Sigmoid colon (tissue), 7 donors: ENCODE measurements at regions of chr9 and their contacts with region 1.

Region 1: GRCh38 chr9:94213511-94214124 is 45.5 kb upstream of the ZNF169 start:
- DNase-seq: peak; percentile 86
- H3K4me3 ChIP-seq: no peak overlapping the region
- H3K27ac ChIP-seq: no peak overlapping the region
- H3K4me1 ChIP-seq: peaks cover 0 to 5% (median 0%) of the 10 kb centered on the region in 4 donors
- H3K27me3 ChIP-seq: no peaks in the 10 kb centered on the region
- CTCF ChIP-seq: peak; percentile 70 to 88 (median 80)
- EP300 ChIP-seq: no peak
- POLR2A ChIP-seq: no peak

Region 2: DNA sequence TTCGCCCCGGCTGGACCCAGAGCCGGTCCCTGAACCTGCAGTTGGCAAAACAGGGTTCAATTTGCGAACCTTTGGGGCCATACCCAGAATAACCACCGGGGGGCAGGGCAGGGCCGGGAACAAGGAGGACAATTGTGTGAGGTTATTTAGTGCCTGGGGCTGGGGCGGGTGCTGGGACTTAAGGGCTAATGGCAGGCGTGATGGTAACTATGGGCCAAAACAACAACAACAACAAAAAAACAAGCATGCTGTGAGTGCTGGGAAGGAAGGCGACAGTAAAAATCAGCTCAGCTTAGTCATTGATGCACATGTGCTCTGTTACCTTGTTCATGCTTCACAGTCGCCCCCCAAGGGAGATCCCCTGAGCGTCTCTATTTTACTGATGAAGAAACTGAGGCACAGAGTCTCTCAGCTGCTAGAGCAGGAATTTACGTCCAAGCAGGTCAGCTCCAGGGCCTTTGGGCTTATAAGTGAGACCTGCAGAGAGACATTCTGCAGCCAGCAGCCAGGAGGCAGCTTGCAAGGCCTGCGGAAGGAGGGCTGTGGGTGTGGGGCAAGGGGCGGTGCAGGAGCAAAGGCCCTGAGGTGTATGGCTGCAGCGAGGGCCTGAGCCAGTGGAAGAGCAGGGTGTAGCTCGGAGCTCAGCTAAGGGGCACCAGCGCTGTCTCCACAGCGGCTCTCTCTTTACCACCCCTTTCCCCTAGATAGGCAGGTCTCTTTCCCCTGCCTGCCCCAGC is 531.2 kb before region 1 on chr9:
- intact Hi-C with region 1: loop called (anchors 5 kb)
- DNase-seq: peak; percentile 75
- H3K4me3 ChIP-seq: no peak overlapping the region
- H3K27ac ChIP-seq: no peak overlapping the region
- H3K4me1 ChIP-seq: peaks cover 0 to 4% (median 0%) of the 10 kb centered on the region in 4 donors
- H3K27me3 ChIP-seq: no peaks in the 10 kb centered on the region
- CTCF ChIP-seq: peak; percentile 70 to 84 (median 82)
- EP300 ChIP-seq: no peak
- POLR2A ChIP-seq: no peak

Region 3: GRCh38 chr9:94018628-94019027 is 195.0 kb before region 1 on chr9:
- intact Hi-C with region 1: loop called (anchors 5 kb)
- DNase-seq: no peak
- H3K4me3 ChIP-seq: no peak overlapping the region
- H3K27ac ChIP-seq: peak overlapping the region in 3 of 4 donors; percentile 39 to 76 (median 41)
- H3K4me1 ChIP-seq: peaks cover 0 to 15% (median 6%) of the 10 kb centered on the region in 4 donors
- H3K27me3 ChIP-seq: no peaks in the 10 kb centered on the region
- CTCF ChIP-seq: no peak
- EP300 ChIP-seq: no peak
- POLR2A ChIP-seq: no peak

Region 4: DNA sequence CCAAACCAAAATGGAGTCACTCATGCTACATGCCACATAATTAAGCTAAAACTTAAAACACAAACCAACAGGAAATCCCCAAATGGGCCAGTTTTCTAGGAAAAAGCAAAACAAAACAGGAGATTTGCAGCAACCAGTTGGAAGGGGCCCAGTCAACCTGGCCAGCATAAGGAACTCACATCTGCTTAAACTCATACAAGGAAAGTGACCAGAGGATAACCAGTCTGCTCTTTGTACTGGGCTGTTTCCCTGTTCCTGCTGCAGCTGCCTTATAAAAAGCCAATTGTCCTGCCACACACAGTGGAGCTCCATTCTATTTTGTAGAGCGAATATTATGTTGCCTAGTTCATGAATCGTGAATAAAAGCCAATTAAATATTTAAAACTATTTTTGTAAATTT is 158.9 kb before region 1 on chr9:
- intact Hi-C with region 1: no loop called
- DNase-seq: peak; percentile 72
- H3K4me3 ChIP-seq: no peak overlapping the region
- H3K27ac ChIP-seq: peak overlapping the region in 1 of 4 donors; percentile 62
- H3K4me1 ChIP-seq: peaks cover 0 to 30% (median 15%) of the 10 kb centered on the region in 4 donors
- H3K27me3 ChIP-seq: no peaks in the 10 kb centered on the region
- CTCF ChIP-seq: no peak
- EP300 ChIP-seq: no peak
- POLR2A ChIP-seq: no peak

Region 5: GRCh38 chr9:94065535-94065961 is 148.1 kb before region 1 on chr9:
- intact Hi-C with region 1: loop called (anchors 1 kb)
- DNase-seq: peak; percentile 89
- H3K4me3 ChIP-seq: no peak overlapping the region
- H3K27ac ChIP-seq: peak overlapping the region in 3 of 4 donors; percentile 9 to 38 (median 28)
- H3K4me1 ChIP-seq: peaks cover 0 to 9% (median 2%) of the 10 kb centered on the region in 4 donors
- H3K27me3 ChIP-seq: no peaks in the 10 kb centered on the region
- CTCF ChIP-seq: peak; percentile 66 to 83 (median 78)
- EP300 ChIP-seq: no peak
- POLR2A ChIP-seq: no peak

Region 6: GRCh38 chr9:94139672-94140417 is 73.8 kb before region 1 on chr9:
- intact Hi-C with region 1: loop called (anchors 5 kb)
- DNase-seq: peak; percentile 96
- H3K4me3 ChIP-seq: no peak overlapping the region
- H3K27ac ChIP-seq: peak overlapping the region; percentile 83 to 90 (median 88)
- H3K4me1 ChIP-seq: peaks cover 0 to 70% (median 65%) of the 10 kb centered on the region in 4 donors
- H3K27me3 ChIP-seq: no peaks in the 10 kb centered on the region
- CTCF ChIP-seq: no peak
- EP300 ChIP-seq: peak in 2 of 4 donors; percentile 32 to 44
- POLR2A ChIP-seq: no peak

Region 7: GRCh38 chr9:94178927-94179326 is 34.7 kb before region 1 on chr9:
- intact Hi-C with region 1: loop called (anchors 5 kb)
- DNase-seq: no peak
- H3K4me3 ChIP-seq: no peak overlapping the region
- H3K27ac ChIP-seq: peak overlapping the region in 1 of 4 donors; percentile 3
- H3K4me1 ChIP-seq: peaks cover 0 to 77% (median 71%) of the 10 kb centered on the region in 4 donors
- H3K27me3 ChIP-seq: no peaks in the 10 kb centered on the region
- CTCF ChIP-seq: no peak
- EP300 ChIP-seq: no peak
- POLR2A ChIP-seq: no peak